Psoas muscle (tissue), 8 donors: ENCODE measurements at regions of chr14 and their contacts with region 1.

Region 1: DNA sequence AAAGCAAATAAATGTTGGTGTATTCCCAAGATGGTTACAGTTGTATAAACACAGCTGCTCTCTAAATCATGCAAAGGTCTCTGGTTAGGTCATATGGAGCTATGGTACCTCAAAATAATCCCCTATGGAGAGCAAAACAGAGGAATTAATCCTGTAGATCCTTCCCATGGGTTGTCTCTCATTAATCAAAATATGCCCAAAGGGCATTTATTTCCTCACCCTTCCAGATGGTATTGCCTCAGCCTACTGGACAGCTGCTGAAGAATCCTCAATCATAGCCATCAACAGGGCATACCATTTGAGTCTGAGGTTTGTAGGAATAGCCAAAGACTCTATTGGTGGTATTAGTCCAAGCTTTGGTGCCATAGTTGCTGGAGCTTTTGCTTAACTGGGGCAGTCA is 360.9 kb downstream of the RPL10L start:
- DNase-seq: no peak
- ATAC-seq: no peak
- H3K4me3 ChIP-seq: no peak overlapping the region
- H3K27ac ChIP-seq: no peak overlapping the region
- H3K4me1 ChIP-seq: no peaks in the 10 kb centered on the region
- H3K27me3 ChIP-seq: no peaks in the 10 kb centered on the region
- CTCF ChIP-seq: no peak

Region 2: GRCh38 chr14:46279327-46279726 is 11.4 kb before region 1 on chr14:
- intact Hi-C with region 1: loop called in 1 of 2 experiments (anchors 1 kb)
- DNase-seq: no peak
- ATAC-seq: no peak
- H3K4me3 ChIP-seq: no peak overlapping the region
- H3K27ac ChIP-seq: no peak overlapping the region
- H3K4me1 ChIP-seq: no peaks in the 10 kb centered on the region
- H3K27me3 ChIP-seq: no peaks in the 10 kb centered on the region
- CTCF ChIP-seq: no peak

Region 3: DNA sequence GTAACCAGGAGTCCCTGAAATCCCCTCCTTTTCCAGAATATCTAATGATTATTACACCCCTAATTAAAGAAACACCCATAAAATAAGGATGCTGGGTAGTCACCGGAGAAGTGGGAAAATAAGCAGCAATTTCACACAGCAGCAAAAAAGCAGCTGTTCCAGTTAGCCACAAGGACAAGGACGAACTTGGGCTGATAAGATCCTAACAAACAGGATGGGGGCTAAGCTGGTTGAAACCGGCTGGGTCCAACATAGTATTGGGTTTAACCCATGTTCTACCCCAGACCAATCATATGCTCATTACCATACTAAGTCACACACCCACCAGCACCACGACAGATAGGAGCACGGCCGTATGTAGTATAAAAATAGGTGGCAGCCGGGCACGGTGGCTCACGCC is 260.1 kb after region 1 on chr14:
- intact Hi-C with region 1: no loop called
- DNase-seq: no peak
- ATAC-seq: no peak
- H3K4me3 ChIP-seq: no peak overlapping the region
- H3K27ac ChIP-seq: no peak overlapping the region
- H3K4me1 ChIP-seq: no peaks in the 10 kb centered on the region
- H3K27me3 ChIP-seq: no peaks in the 10 kb centered on the region
- CTCF ChIP-seq: no peak